ENCODE measurements at regions of chr1 and their contacts with region 1.

Region 1: GRCh38 chr1:18299441-18300338 is 181.0 kb upstream of the KLHDC7A start:
- DNase-seq: peak in 1 of 2 experiments; percentile 62
- H3K4me3 ChIP-seq: no peak overlapping the region
- H3K27ac ChIP-seq: peak overlapping the region; percentile 18; the same call in 1 of the 2 replicates
- H3K4me1 ChIP-seq: peaks cover 17 to 36% (median 18%) of the 10 kb centered on the region in 4 experiments
- H3K27me3 ChIP-seq: no peaks in the 10 kb centered on the region
- CTCF ChIP-seq: peak; percentile 75 to 86 (median 84)
- EP300 ChIP-seq: no peak
- POLR2A ChIP-seq: no peak
- RAD21 ChIP-seq: peak; percentile 53 to 71

Region 2: GRCh38 chr1:18100491-18101063 is 199.1 kb before region 1 on chr1:
- CTCF ChIA-PET with region 1: no interaction called
- POLR2A ChIA-PET with region 1: no interaction called
- DNase-seq: peak in 1 of 2 experiments; percentile 85
- H3K4me3 ChIP-seq: no peak overlapping the region
- H3K27ac ChIP-seq: no peak overlapping the region
- H3K4me1 ChIP-seq: peaks cover 0 to 5% (median 0%) of the 10 kb centered on the region in 4 experiments; a peak in 1 of 7 replicates
- H3K27me3 ChIP-seq: peaks cover 0 to 18% (median 4%) of the 10 kb centered on the region in 4 experiments; a peak in 4 of 7 replicates
- CTCF ChIP-seq: peak; percentile 55 to 84 (median 70)
- EP300 ChIP-seq: no peak
- POLR2A ChIP-seq: no peak
- RAD21 ChIP-seq: peak; percentile 79 to 87

Region 3: DNA sequence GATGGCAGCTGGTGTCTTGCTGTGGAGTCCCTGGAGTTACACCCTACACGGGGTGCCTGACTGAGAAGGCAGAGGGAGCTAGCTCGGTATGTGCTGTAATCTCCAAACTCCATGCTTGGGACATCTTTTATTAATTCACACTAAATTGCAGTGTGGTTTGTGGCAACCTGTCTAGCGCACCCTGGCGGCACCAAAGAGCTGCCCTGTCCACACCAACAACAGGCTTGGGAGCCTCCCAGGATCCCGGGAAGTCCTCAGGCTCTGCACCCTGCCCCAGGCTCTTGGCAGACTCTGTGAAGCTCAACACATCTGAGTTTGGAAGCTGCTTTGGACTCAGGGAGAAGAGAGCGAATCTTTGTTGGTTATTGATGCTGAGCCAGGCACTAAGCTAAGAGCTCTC is 53.1 kb before region 1 on chr1:
- CTCF ChIA-PET with region 1: interaction called, 34 read pairs
- POLR2A ChIA-PET with region 1: no interaction called
- DNase-seq: no peak
- H3K4me3 ChIP-seq: no peak overlapping the region
- H3K27ac ChIP-seq: no peak overlapping the region
- H3K4me1 ChIP-seq: peaks cover 0 to 7% (median 0%) of the 10 kb centered on the region in 4 experiments; a peak in 1 of 7 replicates
- H3K27me3 ChIP-seq: no peaks in the 10 kb centered on the region
- CTCF ChIP-seq: peak; percentile 40 to 57 (median 49); a peak in 3 of 4 replicates
- EP300 ChIP-seq: no peak
- POLR2A ChIP-seq: no peak
- RAD21 ChIP-seq: peak in 1 of 2 experiments; percentile 32; a peak in 2 of 4 replicates

Region 4: GRCh38 chr1:18282851-18283600 is 16.7 kb before region 1 on chr1:
- CTCF ChIA-PET with region 1: interaction called, 31 read pairs
- POLR2A ChIA-PET with region 1: interaction called, 6 read pairs
- DNase-seq: peak in 1 of 2 experiments; percentile 85
- H3K4me3 ChIP-seq: no peak overlapping the region
- H3K27ac ChIP-seq: no peak overlapping the region
- H3K4me1 ChIP-seq: peaks cover 13 to 31% (median 21%) of the 10 kb centered on the region in 4 experiments
- H3K27me3 ChIP-seq: no peaks in the 10 kb centered on the region
- CTCF ChIP-seq: no peak
- EP300 ChIP-seq: peak in 1 of 2 experiments; percentile 34; a peak in 1 of 3 replicates
- POLR2A ChIP-seq: no peak
- RAD21 ChIP-seq: no peak

Region 5: GRCh38 chr1:18373882-18374493 is 74.3 kb after region 1 on chr1:
- CTCF ChIA-PET with region 1: interaction called, 21 read pairs
- POLR2A ChIA-PET with region 1: interaction called, 4 read pairs
- DNase-seq: peak; percentile 44 to 96
- H3K4me3 ChIP-seq: no peak overlapping the region
- H3K27ac ChIP-seq: no peak overlapping the region
- H3K4me1 ChIP-seq: peaks cover 0 to 6% (median 0%) of the 10 kb centered on the region in 4 experiments; a peak in 2 of 7 replicates
- H3K27me3 ChIP-seq: peaks cover 0 to 3% (median 0%) of the 10 kb centered on the region in 4 experiments; a peak in 2 of 7 replicates
- CTCF ChIP-seq: peak; percentile 95 to 96 (median 96)
- EP300 ChIP-seq: no peak
- POLR2A ChIP-seq: no peak
- RAD21 ChIP-seq: peak; percentile 68 to 83

Region 6: DNA sequence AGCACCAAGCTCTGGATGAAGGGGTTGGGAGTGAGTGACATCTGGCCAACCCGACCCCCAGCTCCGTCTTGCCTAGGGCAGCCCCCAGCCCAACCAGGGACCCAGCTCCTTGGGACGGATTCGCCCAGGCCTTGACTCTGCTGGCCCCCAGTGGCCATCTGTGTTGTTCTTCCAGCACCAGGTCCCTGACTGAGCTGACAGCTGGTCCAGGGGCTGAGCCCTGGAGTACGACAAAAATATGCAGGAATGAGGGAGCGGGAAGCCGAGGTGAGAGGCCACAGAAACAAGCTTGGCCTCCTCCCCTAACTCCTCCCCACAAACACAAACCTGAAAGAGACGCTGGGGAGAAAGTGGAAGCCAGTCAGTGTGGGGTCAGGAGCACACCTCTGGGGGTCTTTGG is 275.9 kb after region 1 on chr1:
- CTCF ChIA-PET with region 1: interaction called, 16 read pairs
- POLR2A ChIA-PET with region 1: no interaction called
- DNase-seq: peak; percentile 86 to 99
- H3K4me3 ChIP-seq: no peak overlapping the region
- H3K27ac ChIP-seq: no peak overlapping the region
- H3K4me1 ChIP-seq: no peaks in the 10 kb centered on the region; a peak in 1 of 7 replicates
- H3K27me3 ChIP-seq: no peaks in the 10 kb centered on the region; a peak in 1 of 7 replicates
- CTCF ChIP-seq: peak; percentile 84 to 96 (median 94)
- EP300 ChIP-seq: no peak
- POLR2A ChIP-seq: no peak
- RAD21 ChIP-seq: peak; percentile 98 to 99